CD8-positive, alpha-beta T cell (primary cell): ENCODE measurements at regions of chr1 and their contacts with region 1.

Region 1: DNA sequence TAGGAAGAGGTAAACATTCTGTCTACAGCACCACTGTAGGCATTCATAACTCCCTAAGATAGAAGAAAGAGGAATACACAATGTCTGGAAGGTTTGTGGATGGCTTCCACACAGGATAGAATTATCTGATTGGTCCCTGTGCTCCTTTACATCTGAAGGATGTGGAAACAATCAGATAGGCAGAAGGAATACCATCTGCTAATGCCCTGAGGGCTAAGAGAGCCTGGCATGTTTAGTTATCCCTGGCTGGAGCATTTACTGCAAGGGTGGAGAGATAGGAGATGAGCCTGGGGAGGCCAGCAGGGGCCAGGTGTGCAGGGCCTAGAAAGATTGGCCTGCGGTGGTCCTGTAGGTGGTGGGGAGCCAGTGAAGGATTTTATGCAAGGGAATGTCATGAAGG is 8.6 kb upstream of the ACBD3 start:
- DNase-seq: no peak
- ATAC-seq: no peak
- H3K4me3 ChIP-seq: no peak overlapping the region
- H3K4me3 Mint-ChIP-seq: no peak overlapping the region
- H3K27ac ChIP-seq: no peak overlapping the region
- H3K27ac Mint-ChIP-seq: no peak overlapping the region
- H3K4me1 ChIP-seq: no peaks in the 10 kb centered on the region
- H3K4me1 Mint-ChIP-seq: no peaks in the 10 kb centered on the region
- H3K27me3 ChIP-seq: no peaks in the 10 kb centered on the region
- H3K27me3 Mint-ChIP-seq: peaks cover 7% of the 10 kb centered on the region
- CTCF ChIP-seq: no peak

Region 2: DNA sequence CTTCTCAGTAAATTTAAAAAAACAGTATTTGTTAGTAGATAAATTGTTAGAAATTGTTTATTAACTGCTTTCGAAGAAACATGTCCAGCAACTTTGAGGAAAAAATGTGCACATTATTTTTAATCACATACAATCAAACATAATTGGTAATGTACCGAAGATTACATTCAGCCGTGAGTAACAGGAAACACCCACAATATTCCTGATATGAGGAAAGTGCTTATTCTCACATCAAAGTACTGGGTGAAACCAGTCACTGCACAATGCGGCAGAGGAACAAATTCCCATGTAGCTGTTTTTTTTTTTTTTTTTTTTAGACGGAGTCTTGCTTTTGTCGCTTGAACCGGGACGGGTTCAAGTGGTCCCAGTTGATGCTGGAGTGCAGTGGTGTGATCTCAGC is 18.3 kb before region 1 on chr1:
- CTCF ChIA-PET with region 1: interaction called, 8 read pairs
- POLR2A ChIA-PET with region 1: interaction called, 3 read pairs
- intact Hi-C with region 1: loop called in 1 of 2 experiments (anchors 2 kb)
- DNase-seq: no peak
- ATAC-seq: no peak
- H3K4me3 ChIP-seq: no peak overlapping the region
- H3K4me3 Mint-ChIP-seq: no peak overlapping the region
- H3K27ac ChIP-seq: no peak overlapping the region
- H3K27ac Mint-ChIP-seq: no peak overlapping the region
- H3K4me1 ChIP-seq: peaks cover 16% of the 10 kb centered on the region
- H3K4me1 Mint-ChIP-seq: peaks cover 61% of the 10 kb centered on the region
- H3K27me3 ChIP-seq: no peaks in the 10 kb centered on the region
- H3K27me3 Mint-ChIP-seq: no peaks in the 10 kb centered on the region
- CTCF ChIP-seq: no peak

Region 3: GRCh38 chr1:226569879-226570547 is 374.9 kb after region 1 on chr1:
- CTCF ChIA-PET with region 1: no interaction called
- POLR2A ChIA-PET with region 1: no interaction called
- intact Hi-C with region 1: no loop called
- DNase-seq: peak in 6 of 9 experiments; percentile 18 to 58 (median 46)
- ATAC-seq: peak; percentile 92
- H3K4me3 ChIP-seq: no peak overlapping the region
- H3K4me3 Mint-ChIP-seq: no peak overlapping the region
- H3K27ac ChIP-seq: no peak overlapping the region
- H3K27ac Mint-ChIP-seq: no peak overlapping the region
- H3K4me1 ChIP-seq: no peaks in the 10 kb centered on the region
- H3K4me1 Mint-ChIP-seq: no peaks in the 10 kb centered on the region
- H3K27me3 ChIP-seq: peaks cover 0 to 3% of the 10 kb centered on the region in 2 experiments
- H3K27me3 Mint-ChIP-seq: peaks cover 4% of the 10 kb centered on the region
- CTCF ChIP-seq: peak; percentile 28